Activated T-helper 2 cell treated with anti-CD3 and anti-CD28 coated beads, Interferon-gamma antibody, Interleukin-2, Interleukin-4, amounts not matched to agents 10 μg/mL and 5 μg/mL and 100 μg/mL, durations not matched to agents 14 hours and 24 hours and 36 hours (primary cell): ENCODE measurements at regions of chr11 and their contacts with region 1.

Region 1: GRCh38 chr11:535519-536454 is at the start of gene HRAS:
- DNase-seq: peak; percentile 94
- H3K4me3 Mint-ChIP-seq: peak within 1 kb of the TSS; percentile 89
- H3K27ac Mint-ChIP-seq: peak within 1 kb of the TSS; percentile 82
- H3K4me1 Mint-ChIP-seq: peaks cover 2% of the 10 kb centered on the region
- H3K27me3 Mint-ChIP-seq: no peaks in the 10 kb centered on the region
- total RNA-seq, gene HRAS: 70.5 and 71.5 TPM in 2 replicates

Region 2: DNA sequence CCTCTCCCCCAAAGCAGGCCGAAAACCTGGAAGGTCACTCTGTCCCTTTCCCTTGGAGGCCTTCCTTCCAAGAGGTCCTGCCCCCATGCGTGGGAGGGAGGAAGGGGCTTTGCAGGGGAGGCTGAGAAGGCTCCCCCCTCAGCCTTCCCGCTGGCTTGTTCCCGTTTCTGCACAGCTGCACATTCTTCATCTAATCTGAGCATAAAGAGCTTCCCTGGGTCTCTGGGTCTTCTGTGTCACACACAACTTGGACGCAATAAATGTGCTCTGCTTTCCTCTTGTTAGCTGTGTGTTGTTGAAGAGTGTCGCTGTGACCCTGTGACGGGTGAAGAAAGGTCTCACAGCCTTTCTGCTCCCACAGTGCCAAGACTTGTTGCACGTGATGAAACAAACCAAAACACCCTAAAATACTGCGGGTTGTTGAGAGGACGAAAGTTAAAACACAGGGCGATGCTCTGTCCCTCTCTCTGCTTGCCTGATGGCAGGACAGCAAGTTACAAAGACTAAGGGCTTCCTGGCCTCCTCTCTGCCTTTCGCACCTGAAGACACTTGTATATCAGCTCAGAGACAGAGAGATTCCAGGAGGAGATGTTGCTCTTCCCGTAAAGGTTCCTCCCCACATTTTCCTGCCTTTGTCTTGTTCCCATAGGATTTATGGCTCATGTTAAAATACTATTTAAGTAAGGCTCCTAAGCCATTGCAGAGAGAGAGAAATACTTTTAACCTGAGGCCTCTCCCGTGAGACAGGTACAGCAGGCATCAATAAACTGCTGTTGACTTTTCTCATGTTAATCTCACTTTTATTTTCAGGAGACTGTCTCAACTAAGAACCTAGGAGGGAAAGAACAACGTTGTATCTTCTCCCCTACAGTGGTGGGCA is 199.8 kb before region 1 on chr11:
- intact Hi-C with region 1: no loop called
- DNase-seq: no peak
- H3K4me3 Mint-ChIP-seq: no peak overlapping the region
- H3K27ac Mint-ChIP-seq: no peak overlapping the region
- H3K4me1 Mint-ChIP-seq: peaks cover 25% of the 10 kb centered on the region
- H3K27me3 Mint-ChIP-seq: peaks cover 2% of the 10 kb centered on the region

Region 3: GRCh38 chr11:518463-519250 is 17.1 kb before region 1 on chr11:
- intact Hi-C with region 1: loop called (anchors 2 kb)
- DNase-seq: peak; percentile 80
- H3K4me3 Mint-ChIP-seq: peak overlapping the region; percentile 74
- H3K27ac Mint-ChIP-seq: peak overlapping the region; percentile 60
- H3K4me1 Mint-ChIP-seq: peaks cover 3% of the 10 kb centered on the region
- H3K27me3 Mint-ChIP-seq: no peaks in the 10 kb centered on the region

Region 4: GRCh38 chr11:554824-555472 is 19.2 kb after region 1 on chr11:
- intact Hi-C with region 1: loop called (anchors 2 kb)
- DNase-seq: peak; percentile 59
- H3K4me3 Mint-ChIP-seq: peak overlapping the region; percentile 42
- H3K27ac Mint-ChIP-seq: no peak overlapping the region
- H3K4me1 Mint-ChIP-seq: peaks cover 3% of the 10 kb centered on the region
- H3K27me3 Mint-ChIP-seq: peaks cover 18% of the 10 kb centered on the region

Region 5: GRCh38 chr11:560305-561147 is 24.7 kb after region 1 on chr11 and contains the starts of genes LMNTD2 and RASSF7:
- intact Hi-C with region 1: loop called (anchors 2 kb)
- DNase-seq: peak; percentile 93
- H3K4me3 Mint-ChIP-seq: peak within 1 kb of the TSS; percentile 90
- H3K27ac Mint-ChIP-seq: peak within 1 kb of the TSS; percentile 60
- H3K4me1 Mint-ChIP-seq: peaks cover 4% of the 10 kb centered on the region
- H3K27me3 Mint-ChIP-seq: peaks cover 18% of the 10 kb centered on the region
- total RNA-seq, gene LMNTD2: 1.1 and 1.3 TPM in 2 replicates
- total RNA-seq, gene RASSF7: 19.6 and 20.3 TPM in 2 replicates